ENCODE measurements at regions of chr4 and their contacts with region 1.

Region 1: GRCh38 chr4:14111730-14112181 is 484.2 kb upstream of the BOD1L1 start:
- DNase-seq: peak; percentile 94
- ATAC-seq: peak; percentile 76
- H3K4me3 ChIP-seq: peak overlapping the region; percentile 72
- H3K27ac ChIP-seq: peak overlapping the region; percentile 93
- H3K4me1 ChIP-seq: peaks cover 19% of the 10 kb centered on the region
- H3K27me3 ChIP-seq: no peaks in the 10 kb centered on the region
- CTCF ChIP-seq: no peak

Region 2: DNA sequence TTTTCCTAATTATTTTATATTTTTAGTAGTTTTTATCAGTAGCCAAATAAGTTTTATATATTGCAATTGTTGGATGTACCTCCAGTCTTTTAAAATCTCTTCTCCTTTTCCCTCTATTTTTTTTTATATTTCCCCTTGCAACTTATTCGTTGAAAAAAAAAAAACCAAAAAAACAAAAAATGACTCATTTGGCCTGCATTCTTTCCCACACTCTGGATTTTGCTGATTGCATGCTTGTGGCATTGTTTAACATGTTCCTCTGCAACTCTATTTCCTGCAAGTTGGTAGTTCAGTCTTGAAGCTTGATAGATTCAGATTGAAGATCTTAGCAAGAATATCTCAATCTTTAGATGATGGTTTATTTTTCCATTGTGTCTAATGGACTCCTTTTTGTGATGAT is 223.6 kb before region 1 on chr4:
- CTCF ChIA-PET with region 1: no interaction called
- POLR2A ChIA-PET with region 1: no interaction called
- intact Hi-C with region 1: no loop called
- DNase-seq: peak; percentile 72
- ATAC-seq: no peak
- H3K4me3 ChIP-seq: no peak overlapping the region
- H3K27ac ChIP-seq: peak overlapping the region; percentile 55
- H3K4me1 ChIP-seq: peaks cover 28% of the 10 kb centered on the region
- H3K27me3 ChIP-seq: no peaks in the 10 kb centered on the region
- CTCF ChIP-seq: no peak

Region 3: GRCh38 chr4:14130551-14130950 is 18.8 kb after region 1 on chr4:
- CTCF ChIA-PET with region 1: no interaction called
- POLR2A ChIA-PET with region 1: interaction called, 10 read pairs
- intact Hi-C with region 1: no loop called
- DNase-seq: no peak
- ATAC-seq: no peak
- H3K4me3 ChIP-seq: no peak overlapping the region
- H3K27ac ChIP-seq: no peak overlapping the region
- H3K4me1 ChIP-seq: no peaks in the 10 kb centered on the region
- H3K27me3 ChIP-seq: no peaks in the 10 kb centered on the region
- CTCF ChIP-seq: no peak

Region 4: GRCh38 chr4:14184265-14184664 is 72.5 kb after region 1 on chr4:
- CTCF ChIA-PET with region 1: no interaction called
- POLR2A ChIA-PET with region 1: no interaction called
- intact Hi-C with region 1: loop called (anchors 5 kb)
- DNase-seq: no peak
- ATAC-seq: no peak
- H3K4me3 ChIP-seq: no peak overlapping the region
- H3K27ac ChIP-seq: no peak overlapping the region
- H3K4me1 ChIP-seq: peaks cover 23% of the 10 kb centered on the region
- H3K27me3 ChIP-seq: no peaks in the 10 kb centered on the region
- CTCF ChIP-seq: no peak